SK-N-SH (cell line): ENCODE measurements at regions of chr2 and their contacts with region 1.

Region 1: DNA sequence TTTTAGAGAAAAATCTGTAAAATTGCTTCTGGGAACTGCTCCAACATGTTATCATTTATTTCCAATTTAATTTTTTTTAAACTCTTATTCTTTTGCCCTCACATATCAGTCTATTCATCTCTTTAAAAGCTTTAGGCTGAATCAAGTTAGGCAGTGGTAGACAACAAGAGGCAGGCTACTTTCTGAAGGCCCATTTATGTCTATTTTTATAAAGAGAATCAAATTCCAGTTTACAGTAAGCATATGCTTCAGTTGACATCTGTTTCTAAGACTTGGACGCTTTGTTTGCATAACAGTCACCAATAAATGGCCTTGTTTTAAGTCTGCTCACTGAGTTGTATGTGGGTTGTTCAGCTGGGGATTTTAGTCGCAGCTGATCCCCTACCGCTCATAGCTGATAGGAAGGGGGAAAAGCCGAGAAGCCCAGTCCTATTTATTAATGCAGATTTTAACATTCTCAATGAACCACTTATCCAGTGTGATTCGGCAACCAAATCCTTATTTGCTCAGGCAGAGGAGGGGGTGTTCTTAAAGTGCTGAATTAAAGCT is 260.4 kb upstream of the SIX3 start:
- DNase-seq: peak; percentile 78
- H3K4me3 ChIP-seq: peak overlapping the region; percentile 18 to 35; a peak in 3 of 4 replicates
- H3K27ac ChIP-seq: peak overlapping the region; percentile 49 to 100; a peak in 3 of 4 replicates
- H3K4me1 ChIP-seq: peaks cover 10 to 70% of the 10 kb centered on the region in 2 experiments; a peak in 2 of 4 replicates
- H3K27me3 ChIP-seq: no peaks in the 10 kb centered on the region
- CTCF ChIP-seq: no peak
- EP300 ChIP-seq: peak; percentile 34 to 97; a peak in 3 of 4 replicates
- RAD21 ChIP-seq: peak; percentile 48

Region 2: DNA sequence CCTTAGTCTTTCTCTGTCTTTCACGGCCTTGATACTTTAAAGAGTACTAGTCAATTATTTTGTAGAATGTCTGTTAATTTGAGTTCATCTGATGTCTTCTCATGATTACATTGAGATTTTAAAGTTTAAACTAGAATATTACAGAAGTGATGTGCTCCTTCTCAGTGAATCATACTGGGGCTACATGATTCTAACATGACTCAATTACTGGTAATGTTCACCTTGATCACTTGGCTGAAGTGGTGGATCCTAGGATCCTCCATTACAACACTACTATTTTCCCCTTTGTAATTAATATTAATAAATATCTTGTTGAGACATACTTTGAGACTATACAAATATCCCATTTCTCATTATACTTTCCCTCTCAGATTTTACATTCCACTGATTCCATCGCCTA is 170.8 kb before region 1 on chr2:
- CTCF ChIA-PET with region 1: no interaction called
- POLR2A ChIA-PET with region 1: no interaction called
- DNase-seq: no peak
- H3K4me3 ChIP-seq: no peak overlapping the region
- H3K27ac ChIP-seq: no peak overlapping the region
- H3K4me1 ChIP-seq: peaks cover 0 to 4% of the 10 kb centered on the region in 2 experiments; a peak in 2 of 4 replicates
- H3K27me3 ChIP-seq: no peaks in the 10 kb centered on the region
- CTCF ChIP-seq: no peak
- EP300 ChIP-seq: no peak
- RAD21 ChIP-seq: no peak

Region 3: GRCh38 chr2:44596537-44597320 is 84.3 kb before region 1 on chr2:
- CTCF ChIA-PET with region 1: no interaction called
- POLR2A ChIA-PET with region 1: no interaction called
- DNase-seq: no peak
- H3K4me3 ChIP-seq: no peak overlapping the region
- H3K27ac ChIP-seq: no peak overlapping the region
- H3K4me1 ChIP-seq: peaks cover 0 to 17% of the 10 kb centered on the region in 2 experiments; a peak in 2 of 4 replicates
- H3K27me3 ChIP-seq: no peaks in the 10 kb centered on the region
- CTCF ChIP-seq: no peak
- EP300 ChIP-seq: no peak
- RAD21 ChIP-seq: no peak

Region 4: DNA sequence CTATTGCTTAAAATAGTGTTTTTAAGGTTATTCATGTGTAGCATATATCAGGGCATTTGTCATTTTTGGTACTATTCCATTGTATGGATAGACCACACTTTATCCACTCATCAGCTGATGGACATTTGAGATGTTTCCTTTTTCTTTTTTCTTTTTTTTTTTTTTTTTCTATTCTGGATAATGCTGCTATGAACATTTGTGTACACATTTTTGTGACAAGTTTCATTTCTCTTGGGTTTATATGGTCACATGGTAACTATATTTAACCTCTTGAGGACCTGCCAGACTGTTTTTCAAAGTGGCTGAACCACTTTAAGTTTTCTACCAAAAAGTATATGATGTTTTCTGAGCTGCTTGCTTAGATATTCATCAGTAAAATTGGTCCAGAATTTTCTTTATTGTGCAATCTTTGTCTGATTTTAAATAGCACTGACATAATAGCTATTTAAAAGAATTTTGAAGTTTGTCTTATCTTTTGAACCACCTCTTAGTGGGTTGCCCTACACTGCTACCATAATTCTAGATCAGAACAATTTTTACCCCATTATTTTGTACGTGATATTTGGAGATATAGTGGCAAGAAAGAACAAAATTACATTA is 41.1 kb after region 1 on chr2:
- CTCF ChIA-PET with region 1: no interaction called
- POLR2A ChIA-PET with region 1: no interaction called
- DNase-seq: no peak
- H3K4me3 ChIP-seq: no peak overlapping the region
- H3K27ac ChIP-seq: no peak overlapping the region
- H3K4me1 ChIP-seq: no peaks in the 10 kb centered on the region; a peak in 2 of 4 replicates
- H3K27me3 ChIP-seq: no peaks in the 10 kb centered on the region
- CTCF ChIP-seq: no peak
- EP300 ChIP-seq: no peak
- RAD21 ChIP-seq: no peak

Region 5: GRCh38 chr2:44770221-44771195 is 89.5 kb after region 1 on chr2:
- CTCF ChIA-PET with region 1: interaction called, 10 read pairs
- POLR2A ChIA-PET with region 1: interaction called, 5 read pairs
- DNase-seq: peak; percentile 64
- H3K4me3 ChIP-seq: no peak overlapping the region
- H3K27ac ChIP-seq: peak overlapping the region in 1 of 2 experiments; percentile 99; a peak in 2 of 4 replicates
- H3K4me1 ChIP-seq: peaks cover 0 to 91% of the 10 kb centered on the region in 2 experiments; a peak in 3 of 4 replicates
- H3K27me3 ChIP-seq: no peaks in the 10 kb centered on the region
- CTCF ChIP-seq: no peak; the same call in 1 of the 2 replicates
- EP300 ChIP-seq: no peak
- RAD21 ChIP-seq: peak; percentile 46